Activated CD4-positive, alpha-beta T cell treated with anti-CD3 and anti-CD28 coated beads, Interleukin-2, amount 10 ng/mL, durations not matched to agents 24 days and 14 days (primary cell): ENCODE measurements at regions of chr2 and their contacts with region 1.

Region 1: GRCh38 chr2:175181104-175181876 is at the start of gene ATP5MC3:
- DNase-seq: peak; percentile 97
- H3K4me3 Mint-ChIP-seq: peak within 1 kb of the TSS; percentile 88
- H3K27ac Mint-ChIP-seq: peak within 1 kb of the TSS; percentile 94
- H3K4me1 Mint-ChIP-seq: peaks cover 20% of the 10 kb centered on the region
- H3K27me3 Mint-ChIP-seq: no peaks in the 10 kb centered on the region
- total RNA-seq, gene ATP5MC3: 405 and 414 TPM in 2 replicates

Region 2: DNA sequence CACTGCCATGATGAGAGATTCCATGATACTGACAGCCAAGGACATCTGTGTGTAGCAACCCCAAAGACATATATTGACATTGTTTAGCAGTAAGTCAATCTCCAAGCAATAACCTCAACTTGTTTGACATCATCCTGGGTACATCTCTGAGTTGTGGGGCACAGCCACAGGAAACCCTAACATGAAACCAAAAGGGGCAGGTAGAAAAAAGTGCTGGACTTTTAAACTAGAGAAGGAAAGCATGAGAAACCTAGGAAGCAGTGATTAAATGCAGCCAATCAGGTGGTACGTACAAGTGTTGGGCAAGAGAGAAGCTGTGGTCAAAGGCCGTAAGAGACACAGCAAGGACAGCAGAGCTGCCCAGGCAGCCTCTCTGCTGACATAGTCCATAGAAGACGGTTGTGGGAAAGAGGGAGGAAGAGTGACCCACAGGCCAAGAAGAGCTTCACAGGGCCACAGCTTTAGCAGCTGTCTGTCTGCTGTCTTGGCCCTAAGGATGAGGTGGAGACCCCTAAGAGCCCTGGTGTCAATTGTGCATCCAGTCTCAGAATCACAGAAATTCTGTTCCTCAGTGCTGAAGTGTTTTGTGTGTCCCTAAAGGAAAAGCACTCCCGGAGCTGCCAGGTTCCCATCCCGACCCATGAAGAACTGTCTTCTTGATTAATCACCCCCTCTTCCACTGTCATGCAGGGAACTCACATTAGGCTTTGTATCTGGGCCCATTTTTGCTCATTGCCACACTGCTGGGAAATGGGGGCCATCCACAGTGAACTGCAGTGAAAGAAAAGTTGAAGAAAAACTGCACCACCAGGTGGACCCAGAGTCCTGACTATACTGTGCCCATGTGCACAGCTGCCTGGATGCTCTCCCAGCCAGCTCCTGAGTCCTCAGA is 150.7 kb before region 1 on chr2:
- intact Hi-C with region 1: loop called (anchors 10 kb)
- DNase-seq: peak; percentile 67
- H3K4me3 Mint-ChIP-seq: no peak overlapping the region
- H3K27ac Mint-ChIP-seq: no peak overlapping the region
- H3K4me1 Mint-ChIP-seq: no peaks in the 10 kb centered on the region
- H3K27me3 Mint-ChIP-seq: peaks cover 3% of the 10 kb centered on the region

Region 3: GRCh38 chr2:175123254-175123653 is 58.0 kb before region 1 on chr2:
- intact Hi-C with region 1: no loop called
- DNase-seq: no peak
- H3K4me3 Mint-ChIP-seq: no peak overlapping the region
- H3K27ac Mint-ChIP-seq: no peak overlapping the region
- H3K4me1 Mint-ChIP-seq: peaks cover 3% of the 10 kb centered on the region
- H3K27me3 Mint-ChIP-seq: no peaks in the 10 kb centered on the region

Region 4: DNA sequence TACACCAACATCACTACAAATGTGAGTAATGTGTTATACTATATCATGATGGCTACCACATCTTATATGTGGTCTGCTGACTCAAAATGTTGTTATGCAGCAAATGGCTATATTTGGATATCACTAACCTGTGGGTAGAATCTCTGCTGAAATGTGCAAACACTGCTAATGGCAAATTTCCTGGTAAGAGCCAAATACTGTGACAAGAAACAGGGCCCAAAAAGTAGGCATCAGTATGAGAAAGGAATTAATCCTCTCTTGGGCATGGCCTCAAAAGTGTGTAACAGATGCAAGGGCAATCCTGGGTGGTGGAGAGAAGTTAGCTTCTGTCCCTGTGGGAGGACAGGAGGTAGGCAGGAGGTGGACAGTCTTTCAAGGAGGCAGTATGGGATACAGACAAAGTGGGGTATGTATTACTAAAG is 26.6 kb before region 1 on chr2:
- intact Hi-C with region 1: loop called (anchors 2 kb)
- DNase-seq: peak; percentile 64
- H3K4me3 Mint-ChIP-seq: peak overlapping the region; percentile 24
- H3K27ac Mint-ChIP-seq: peak overlapping the region; percentile 86
- H3K4me1 Mint-ChIP-seq: peaks cover 22% of the 10 kb centered on the region
- H3K27me3 Mint-ChIP-seq: no peaks in the 10 kb centered on the region